ENCODE measurements at regions of chr15 and their contacts with region 1.

Region 1: GRCh38 chr15:41465822-41466421 is 27.8 kb upstream of the ITPKA start:
- DNase-seq: peak; percentile 48
- ATAC-seq: peak; percentile 92
- H3K4me3 Mint-ChIP-seq: no peak overlapping the region
- H3K27ac Mint-ChIP-seq: no peak overlapping the region
- H3K4me1 Mint-ChIP-seq: peaks cover 4% of the 10 kb centered on the region
- H3K27me3 Mint-ChIP-seq: no peaks in the 10 kb centered on the region
- CTCF ChIP-seq: peak; percentile 99

Region 2: GRCh38 chr15:41476416-41477048 is 10.6 kb after region 1 on chr15:
- CTCF ChIA-PET with region 1: interaction called, 49 read pairs
- POLR2A ChIA-PET with region 1: interaction called, 5 read pairs
- intact Hi-C with region 1: no loop called
- DNase-seq: no peak
- ATAC-seq: peak; percentile 54
- H3K4me3 Mint-ChIP-seq: no peak overlapping the region
- H3K27ac Mint-ChIP-seq: peak overlapping the region; percentile 84
- H3K4me1 Mint-ChIP-seq: peaks cover 13% of the 10 kb centered on the region
- H3K27me3 Mint-ChIP-seq: no peaks in the 10 kb centered on the region
- CTCF ChIP-seq: no peak

Region 3: DNA sequence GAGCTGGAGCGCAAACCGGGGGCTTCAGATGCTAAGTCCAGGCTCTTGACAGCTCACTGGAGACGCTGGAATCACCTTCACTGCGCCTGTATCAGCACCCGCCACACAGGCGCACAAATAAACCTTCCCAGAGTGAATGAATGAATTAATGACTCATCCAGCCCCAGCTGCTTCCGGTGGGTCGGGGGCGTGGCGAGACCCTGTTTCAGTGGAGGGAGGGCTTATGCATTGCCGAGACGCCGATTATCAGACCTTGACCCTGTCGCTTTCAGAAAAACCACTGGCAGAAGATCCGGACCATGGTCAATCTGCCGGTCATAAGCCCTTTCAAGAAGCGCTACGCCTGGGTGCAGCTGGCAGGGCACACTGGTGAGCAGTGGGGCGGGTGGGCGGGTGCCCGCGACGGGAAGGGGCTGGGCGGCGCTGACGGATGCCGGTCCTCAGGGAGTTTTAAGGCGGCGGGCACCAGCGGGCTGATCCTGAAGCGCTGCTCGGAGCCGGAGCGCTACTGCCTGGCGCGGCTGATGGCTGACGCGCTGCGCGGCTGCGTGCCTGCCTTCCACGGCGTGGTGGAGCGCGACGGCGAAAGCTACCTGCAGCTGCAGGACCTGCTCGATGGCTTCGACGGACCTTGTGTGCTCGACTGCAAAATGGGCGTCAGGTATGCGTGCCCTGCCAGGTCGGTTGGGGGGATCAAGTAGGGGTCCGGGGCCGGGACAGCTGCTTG is 35.4 kb after region 1 on chr15:
- CTCF ChIA-PET with region 1: interaction called, 39 read pairs
- POLR2A ChIA-PET with region 1: interaction called, 5 read pairs
- intact Hi-C with region 1: loop called (anchors 5 kb)
- DNase-seq: peak; percentile 53
- ATAC-seq: peak; percentile 50
- H3K4me3 Mint-ChIP-seq: peak overlapping the region; percentile 58
- H3K27ac Mint-ChIP-seq: no peak overlapping the region
- H3K4me1 Mint-ChIP-seq: peaks cover 17% of the 10 kb centered on the region
- H3K27me3 Mint-ChIP-seq: peaks cover 70% of the 10 kb centered on the region
- CTCF ChIP-seq: no peak

Region 4: DNA sequence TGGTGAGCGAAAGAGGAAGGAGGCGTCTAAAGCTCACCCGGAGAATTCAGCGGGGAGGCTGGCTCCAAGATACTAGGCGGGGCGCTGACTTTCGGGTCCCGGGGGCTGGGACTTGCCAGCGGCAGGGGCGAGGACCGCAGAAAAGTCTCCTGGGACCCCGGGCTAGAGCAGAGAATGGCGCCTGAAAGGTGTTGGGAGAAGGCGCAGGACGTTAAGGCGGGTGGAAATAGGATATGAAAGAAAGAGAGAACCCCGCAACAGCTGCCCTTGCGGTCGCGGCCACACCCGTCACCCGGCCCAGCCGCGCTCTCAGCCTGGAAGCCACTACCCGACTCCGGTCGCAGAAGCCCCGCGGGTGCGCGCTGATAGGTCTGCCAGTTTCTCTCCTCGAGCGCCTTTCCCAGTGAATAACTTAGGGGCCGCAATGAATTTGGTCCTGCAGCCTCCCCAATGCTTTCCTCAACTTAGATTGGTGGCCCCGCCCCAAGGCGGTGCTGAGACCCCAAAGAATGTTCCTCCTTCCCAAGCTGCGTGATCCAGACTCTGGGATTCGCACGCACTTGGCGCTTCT is 47.1 kb after region 1 on chr15:
- CTCF ChIA-PET with region 1: interaction called, 39 read pairs
- POLR2A ChIA-PET with region 1: interaction called, 4 read pairs
- intact Hi-C with region 1: loop called (anchors 5 kb)
- DNase-seq: peak; percentile 45
- ATAC-seq: no peak
- H3K4me3 Mint-ChIP-seq: peak overlapping the region; percentile 57
- H3K27ac Mint-ChIP-seq: no peak overlapping the region
- H3K4me1 Mint-ChIP-seq: peaks cover 24% of the 10 kb centered on the region
- H3K27me3 Mint-ChIP-seq: peaks cover 33% of the 10 kb centered on the region
- CTCF ChIP-seq: no peak

Region 5: GRCh38 chr15:41603941-41604911 is 138.3 kb after region 1 on chr15:
- CTCF ChIA-PET with region 1: interaction called, 14 read pairs
- POLR2A ChIA-PET with region 1: no interaction called
- intact Hi-C with region 1: no loop called
- DNase-seq: peak; percentile 69
- ATAC-seq: peak; percentile 97
- H3K4me3 Mint-ChIP-seq: peak overlapping the region; percentile 48
- H3K27ac Mint-ChIP-seq: no peak overlapping the region
- H3K4me1 Mint-ChIP-seq: peaks cover 10% of the 10 kb centered on the region
- H3K27me3 Mint-ChIP-seq: peaks cover 7% of the 10 kb centered on the region
- CTCF ChIP-seq: peak; percentile 79

Region 6: DNA sequence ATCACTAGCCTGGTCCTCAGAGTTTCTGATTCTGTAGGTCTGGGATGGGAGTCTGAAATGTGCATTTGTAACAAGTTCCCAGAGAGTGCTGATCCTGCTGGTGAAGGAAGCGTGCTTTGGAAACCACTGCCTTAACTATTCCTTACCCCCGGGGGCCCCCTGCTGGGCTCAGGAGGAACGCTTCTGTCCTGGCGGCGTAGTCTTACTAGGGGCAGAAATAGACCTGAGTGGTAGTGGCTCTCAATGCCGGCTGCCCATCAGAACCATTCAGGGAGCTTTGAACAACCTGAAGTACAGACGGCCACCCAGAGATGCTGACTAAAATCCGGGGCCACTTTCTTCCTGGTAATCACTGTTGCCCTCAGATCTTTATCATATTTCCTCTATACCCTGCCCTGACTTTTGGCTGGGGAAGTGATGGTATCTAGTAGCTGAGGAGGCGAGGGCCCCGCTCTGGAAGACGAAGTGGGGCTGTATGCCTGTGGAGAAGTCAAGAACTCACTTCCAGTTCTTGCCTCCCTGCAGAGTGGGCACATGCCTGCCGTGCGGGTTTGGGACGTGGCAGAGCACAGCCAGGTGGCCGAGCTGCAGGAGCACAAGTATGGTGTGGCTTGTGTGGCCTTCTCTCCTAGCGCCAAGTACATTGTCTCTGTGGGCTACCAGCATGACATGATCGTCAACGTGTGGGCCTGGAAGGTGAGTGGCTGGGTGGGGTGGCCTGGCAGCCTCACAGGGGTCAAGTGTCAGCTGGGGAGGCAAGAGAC is 345.7 kb after region 1 on chr15:
- CTCF ChIA-PET with region 1: interaction called, 11 read pairs
- POLR2A ChIA-PET with region 1: no interaction called
- intact Hi-C with region 1: no loop called
- DNase-seq: peak; percentile 86
- ATAC-seq: peak; percentile 91
- H3K4me3 Mint-ChIP-seq: no peak overlapping the region
- H3K27ac Mint-ChIP-seq: no peak overlapping the region
- H3K4me1 Mint-ChIP-seq: peaks cover 18% of the 10 kb centered on the region
- H3K27me3 Mint-ChIP-seq: no peaks in the 10 kb centered on the region
- CTCF ChIP-seq: peak; percentile 92

Measured in activated CD8-positive, alpha-beta T cell treated with anti-CD3 and anti-CD28 coated beads for 36 hours (primary cell).